ENCODE measurements at regions of chrX and their contacts with region 1.

Region 1: GRCh38 chrX:71378732-71379131 is 12.6 kb downstream of the TAF1 start:
- DNase-seq: no peak
- ATAC-seq: no peak
- H3K4me3 ChIP-seq: no peak overlapping the region
- H3K27ac ChIP-seq: no peak overlapping the region
- H3K4me1 ChIP-seq: no peaks in the 10 kb centered on the region
- H3K27me3 ChIP-seq: no peaks in the 10 kb centered on the region
- CTCF ChIP-seq: no peak

Region 2: DNA sequence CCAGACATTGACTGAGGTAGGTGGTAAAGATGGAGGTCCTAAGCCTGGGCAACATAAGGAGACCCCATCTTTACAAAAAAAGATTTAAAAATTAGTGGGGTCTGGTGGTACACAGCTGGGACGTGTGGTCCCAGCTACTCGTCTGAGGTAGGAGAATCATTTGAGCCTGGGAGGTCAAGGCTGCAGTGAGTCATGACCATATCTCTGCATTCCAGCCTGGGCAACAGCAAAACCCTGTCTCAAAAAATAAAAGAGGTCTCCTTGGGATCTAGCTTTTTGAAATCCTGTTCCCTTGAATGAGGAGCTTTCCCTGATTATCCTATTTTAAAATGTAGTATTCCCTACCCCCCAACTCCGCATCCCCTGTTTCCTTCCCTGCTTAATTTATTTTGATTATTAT is 75.5 kb after region 1 on chrX:
- intact Hi-C with region 1: loop called in 1 of 2 experiments (anchors 10 kb)
- DNase-seq: no peak
- ATAC-seq: no peak
- H3K4me3 ChIP-seq: no peak overlapping the region
- H3K27ac ChIP-seq: no peak overlapping the region
- H3K4me1 ChIP-seq: no peaks in the 10 kb centered on the region
- H3K27me3 ChIP-seq: no peaks in the 10 kb centered on the region
- CTCF ChIP-seq: no peak

Region 3: GRCh38 chrX:71482228-71482958 is 103.7 kb after region 1 on chrX:
- intact Hi-C with region 1: no loop called
- DNase-seq: no peak
- ATAC-seq: no peak
- H3K4me3 ChIP-seq: no peak overlapping the region
- H3K27ac ChIP-seq: no peak overlapping the region
- H3K4me1 ChIP-seq: no peaks in the 10 kb centered on the region
- H3K27me3 ChIP-seq: no peaks in the 10 kb centered on the region
- CTCF ChIP-seq: no peak

Region 4: DNA sequence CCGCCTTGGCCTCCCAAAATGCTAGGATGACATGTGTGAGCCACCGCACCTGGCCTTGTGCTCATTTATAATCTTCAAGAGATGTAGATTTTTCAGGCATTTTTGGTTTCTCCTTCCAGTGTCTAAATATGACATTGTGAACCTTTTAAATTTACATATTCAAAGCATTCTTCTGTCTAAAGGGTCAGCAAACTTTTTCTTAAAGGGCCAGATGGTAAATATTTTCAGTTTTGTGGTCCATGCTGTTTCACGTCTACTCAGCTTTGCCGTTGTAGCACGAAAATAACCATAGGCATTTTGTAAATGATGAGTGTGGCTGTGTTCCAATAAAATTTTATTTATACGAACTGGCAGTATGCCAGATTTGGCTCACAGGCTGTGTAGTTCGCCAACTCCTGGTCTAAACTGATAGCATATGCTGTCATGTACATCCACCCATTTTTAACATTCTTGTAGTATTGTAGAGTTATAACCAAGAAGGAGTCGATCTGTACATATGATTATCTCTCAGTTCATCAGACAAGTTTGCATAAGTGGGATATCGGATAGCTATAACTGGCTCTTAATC is 186.8 kb after region 1 on chrX:
- intact Hi-C with region 1: loop called in 1 of 2 experiments (anchors 10 kb)
- DNase-seq: no peak
- ATAC-seq: peak in 2 of 4 donors; percentile 49 to 62
- H3K4me3 ChIP-seq: no peak overlapping the region
- H3K27ac ChIP-seq: no peak overlapping the region
- H3K4me1 ChIP-seq: no peaks in the 10 kb centered on the region
- H3K27me3 ChIP-seq: no peaks in the 10 kb centered on the region
- CTCF ChIP-seq: no peak